Heart right ventricle (tissue), 16 donors: ENCODE measurements at regions of chr18 and their contacts with region 1.

Region 1: GRCh38 chr18:58864146-58865032 is at the start of gene ZNF532:
- DNase-seq: peak; percentile 35 to 42
- ATAC-seq: peak; percentile 28 to 77 (median 64)
- H3K4me3 ChIP-seq: peak within 1 kb of the TSS; percentile 34 to 68 (median 55)
- H3K27ac ChIP-seq: peak within 1 kb of the TSS; percentile 93 to 100 (median 98)
- H3K4me1 ChIP-seq: peaks cover 23 to 93% (median 73%) of the 10 kb centered on the region in 9 donors
- H3K27me3 ChIP-seq: no peaks in the 10 kb centered on the region
- CTCF ChIP-seq: no peak
- total RNA-seq, gene ZNF532: 53.4 to 71.4 (median 66.8) TPM

Region 2: DNA sequence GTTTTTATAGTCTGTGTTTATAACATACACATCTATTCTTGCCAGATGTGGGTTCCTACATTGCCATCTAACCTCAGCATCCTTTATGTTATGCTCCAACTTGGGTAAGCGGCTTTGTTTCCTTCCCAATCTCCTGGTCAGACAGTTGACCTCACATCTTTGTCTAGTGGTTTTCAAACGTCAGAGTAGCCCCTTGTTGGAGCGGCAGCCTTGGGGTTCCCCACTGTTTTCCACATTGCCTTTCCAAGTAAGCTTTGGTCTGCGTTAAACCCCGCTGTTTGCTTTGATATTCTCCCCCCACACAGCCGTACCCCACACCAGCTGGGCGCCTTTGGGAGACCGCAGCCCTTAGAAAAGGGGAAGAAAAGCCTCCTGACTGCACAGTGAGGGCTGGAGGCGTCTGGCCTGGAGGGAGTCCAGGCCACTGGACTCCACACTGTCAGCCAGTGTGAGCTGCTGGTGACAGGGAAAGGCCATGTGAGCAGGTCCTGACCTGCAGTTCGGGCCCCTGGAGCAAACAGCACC is 109.8 kb before region 1 on chr18:
- intact Hi-C with region 1: no loop called
- DNase-seq: peak; percentile 36 to 43
- ATAC-seq: peak; percentile 81 to 90 (median 86)
- H3K4me3 ChIP-seq: no peak overlapping the region
- H3K27ac ChIP-seq: peak overlapping the region in 7 of 10 donors; percentile 2 to 65 (median 62)
- H3K4me1 ChIP-seq: peaks cover 0 to 21% (median 15%) of the 10 kb centered on the region in 9 donors
- H3K27me3 ChIP-seq: no peaks in the 10 kb centered on the region
- CTCF ChIP-seq: no peak

Region 3: GRCh38 chr18:58911766-58912165 is 47.4 kb after region 1 on chr18:
- intact Hi-C with region 1: loop called in 1 of 10 experiments (anchors 5 kb)
- DNase-seq: peak in 1 of 2 donors; percentile 45
- ATAC-seq: peak; percentile 52 to 74 (median 70)
- H3K4me3 ChIP-seq: peak overlapping the region in 5 of 10 donors; percentile 3 to 28 (median 17)
- H3K27ac ChIP-seq: peak overlapping the region; percentile 4 to 90 (median 76)
- H3K4me1 ChIP-seq: peaks cover 4 to 91% (median 45%) of the 10 kb centered on the region in 9 donors
- H3K27me3 ChIP-seq: no peaks in the 10 kb centered on the region
- CTCF ChIP-seq: peak in 1 of 9 donors; percentile 4

Region 4: DNA sequence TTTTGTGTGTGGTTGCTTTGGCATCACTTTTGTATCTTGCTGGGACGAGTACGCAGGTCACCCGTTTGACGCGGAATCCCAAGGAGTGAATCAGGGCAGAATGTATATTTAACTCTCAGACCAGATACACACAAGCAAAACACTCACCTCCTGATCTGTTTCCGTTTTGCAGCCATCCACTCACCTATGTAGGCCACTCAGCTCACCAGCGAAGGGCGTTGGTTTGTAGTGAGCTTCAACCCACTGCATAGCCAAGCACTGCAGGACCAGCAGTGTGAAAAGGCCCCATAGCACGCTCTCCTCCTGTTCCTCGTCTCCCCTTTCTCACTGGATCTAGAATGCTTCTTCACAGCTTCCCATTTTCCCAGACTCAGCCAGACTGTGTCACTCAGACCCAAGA is 58.6 kb after region 1 on chr18:
- intact Hi-C with region 1: no loop called
- DNase-seq: no peak
- ATAC-seq: peak in 2 of 8 donors; percentile 6 to 20
- H3K4me3 ChIP-seq: no peak overlapping the region
- H3K27ac ChIP-seq: no peak overlapping the region
- H3K4me1 ChIP-seq: peaks cover 0 to 22% (median 15%) of the 10 kb centered on the region in 9 donors
- H3K27me3 ChIP-seq: no peaks in the 10 kb centered on the region
- CTCF ChIP-seq: no peak

Region 5: DNA sequence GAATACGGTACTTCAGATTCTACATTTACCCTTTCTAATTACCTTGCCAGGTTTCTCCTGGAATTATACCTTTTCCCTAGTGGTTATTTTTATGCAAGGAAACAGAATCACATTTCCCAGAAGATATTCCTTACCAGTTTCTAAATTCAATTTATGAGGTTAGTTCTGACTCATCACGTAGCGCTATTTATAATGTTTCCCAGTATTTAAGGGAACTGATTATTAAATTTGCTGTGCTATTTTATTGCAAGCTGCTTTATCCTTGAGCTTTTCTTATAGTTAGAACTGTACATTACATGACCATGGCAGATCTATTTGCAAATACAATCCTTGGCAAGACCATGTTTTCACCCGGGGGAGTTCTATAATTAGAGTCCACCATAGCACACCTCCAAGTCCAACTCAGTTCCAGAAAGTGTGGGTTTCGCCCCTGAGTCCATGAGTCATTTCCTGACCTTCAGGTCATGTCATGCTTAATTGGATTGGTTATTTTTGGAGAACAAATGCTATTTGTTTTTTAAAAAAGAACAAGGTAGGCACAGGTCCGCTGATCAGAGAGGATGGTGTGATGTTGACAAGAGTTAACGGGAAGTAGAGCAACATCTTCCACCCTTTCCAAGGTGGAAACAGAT is 126.9 kb after region 1 on chr18:
- intact Hi-C with region 1: loop called in 2 of 10 experiments (anchors 5 kb)
- DNase-seq: no peak
- ATAC-seq: peak in 7 of 8 donors; percentile 27 to 78 (median 52)
- H3K4me3 ChIP-seq: no peak overlapping the region
- H3K27ac ChIP-seq: peak overlapping the region in 9 of 10 donors; percentile 70 to 94 (median 87)
- H3K4me1 ChIP-seq: peaks cover 8 to 68% (median 56%) of the 10 kb centered on the region in 9 donors
- H3K27me3 ChIP-seq: no peaks in the 10 kb centered on the region
- CTCF ChIP-seq: no peak

Region 6: GRCh38 chr18:58998401-58999203 is 134.2 kb after region 1 on chr18:
- intact Hi-C with region 1: loop called in 2 of 10 experiments (anchors 5 kb)
- DNase-seq: peak; percentile 52 to 83
- ATAC-seq: peak; percentile 57 to 92 (median 80)
- H3K4me3 ChIP-seq: peak overlapping the region in 6 of 10 donors; percentile 3 to 34 (median 19)
- H3K27ac ChIP-seq: peak overlapping the region; percentile 70 to 94 (median 87)
- H3K4me1 ChIP-seq: peaks cover 6 to 68% (median 49%) of the 10 kb centered on the region in 9 donors
- H3K27me3 ChIP-seq: no peaks in the 10 kb centered on the region
- CTCF ChIP-seq: peak in 1 of 9 donors; percentile 4

Region 7: GRCh38 chr18:59056706-59057492 is 192.5 kb after region 1 on chr18:
- intact Hi-C with region 1: loop called in 2 of 10 experiments (anchors 5 to 10 kb)
- DNase-seq: peak; percentile 82 to 87
- ATAC-seq: peak; percentile 30 to 86 (median 70)
- H3K4me3 ChIP-seq: no peak overlapping the region
- H3K27ac ChIP-seq: peak overlapping the region in 4 of 10 donors; percentile 12 to 26 (median 23)
- H3K4me1 ChIP-seq: peaks cover 0 to 33% (median 5%) of the 10 kb centered on the region in 9 donors
- H3K27me3 ChIP-seq: no peaks in the 10 kb centered on the region
- CTCF ChIP-seq: peak in 8 of 9 donors; percentile 40 to 94 (median 87)